HEK293T (cell line): ENCODE measurements at regions of chr5 and their contacts with region 1.

Region 1: GRCh38 chr5:140690941-140691924 is at the starts of genes HARS1 and HARS2:
- DNase-seq: peak; percentile 92

Region 2: DNA sequence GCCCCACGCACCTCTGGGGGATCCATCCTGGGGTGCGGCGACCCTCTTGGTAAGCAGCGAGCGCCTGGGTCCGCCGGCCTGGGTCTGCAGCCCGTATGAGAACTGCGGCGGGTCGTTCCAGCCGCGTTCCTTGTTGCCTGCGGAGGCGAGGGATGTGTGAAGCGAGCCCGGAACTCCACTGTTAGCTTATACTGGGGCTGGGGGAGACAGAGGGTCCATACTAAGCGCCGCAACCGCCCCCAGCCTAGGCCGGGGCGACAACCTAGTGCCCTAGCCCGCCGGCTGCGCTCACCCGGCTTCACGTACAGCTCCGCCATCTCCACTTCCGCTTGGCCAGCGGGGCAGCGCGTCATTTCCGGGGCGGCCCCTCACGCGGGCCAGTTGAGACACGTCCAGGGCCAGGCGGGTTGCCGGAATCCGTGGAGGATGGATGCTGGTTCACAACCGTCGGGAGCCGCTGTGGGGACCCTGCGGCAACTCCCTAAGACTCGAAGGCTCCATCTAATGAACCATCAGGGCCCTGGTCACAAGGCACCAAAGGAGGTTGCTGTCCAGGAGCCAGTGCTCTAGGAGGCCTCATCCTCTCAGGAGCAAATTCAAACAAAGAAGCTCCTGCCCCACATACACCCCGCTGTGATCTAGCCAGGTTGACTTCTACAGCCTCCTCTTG is 134.0 kb before region 1 on chr5 and contains the start of gene SRA1:
- CTCF ChIA-PET with region 1: no interaction called
- POLR2A ChIA-PET with region 1: interaction called, 10 read pairs
- DNase-seq: peak; percentile 92

Region 3: DNA sequence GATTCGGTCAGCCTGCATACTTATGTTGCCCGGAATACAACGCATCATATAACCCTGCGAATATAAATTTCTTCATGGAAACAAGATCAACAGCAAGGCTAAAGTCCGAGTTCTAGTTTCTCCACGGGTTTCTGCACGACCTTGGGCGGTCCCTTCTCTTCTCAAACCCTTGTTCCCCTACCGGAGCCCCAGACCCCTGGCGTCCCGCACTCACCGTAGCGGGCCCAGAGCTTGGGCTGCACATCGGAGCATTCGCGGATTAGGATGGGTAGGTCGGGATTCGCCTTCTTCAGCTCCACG is 44.2 kb before region 1 on chr5:
- CTCF ChIA-PET with region 1: no interaction called
- POLR2A ChIA-PET with region 1: interaction called, 18 read pairs
- DNase-seq: peak; percentile 22

Region 4: GRCh38 chr5:140677947-140678346 is 13.3 kb before region 1 on chr5:
- CTCF ChIA-PET with region 1: interaction called, 7 read pairs
- POLR2A ChIA-PET with region 1: interaction called, 13 read pairs
- DNase-seq: no peak

Region 5: GRCh38 chr5:140718241-140718580 is 27.0 kb after region 1 on chr5:
- CTCF ChIA-PET with region 1: interaction called, 3 read pairs
- POLR2A ChIA-PET with region 1: interaction called, 11 read pairs
- DNase-seq: no peak